ENCODE measurements at regions of chr3 and their contacts with region 1.

Region 1: DNA sequence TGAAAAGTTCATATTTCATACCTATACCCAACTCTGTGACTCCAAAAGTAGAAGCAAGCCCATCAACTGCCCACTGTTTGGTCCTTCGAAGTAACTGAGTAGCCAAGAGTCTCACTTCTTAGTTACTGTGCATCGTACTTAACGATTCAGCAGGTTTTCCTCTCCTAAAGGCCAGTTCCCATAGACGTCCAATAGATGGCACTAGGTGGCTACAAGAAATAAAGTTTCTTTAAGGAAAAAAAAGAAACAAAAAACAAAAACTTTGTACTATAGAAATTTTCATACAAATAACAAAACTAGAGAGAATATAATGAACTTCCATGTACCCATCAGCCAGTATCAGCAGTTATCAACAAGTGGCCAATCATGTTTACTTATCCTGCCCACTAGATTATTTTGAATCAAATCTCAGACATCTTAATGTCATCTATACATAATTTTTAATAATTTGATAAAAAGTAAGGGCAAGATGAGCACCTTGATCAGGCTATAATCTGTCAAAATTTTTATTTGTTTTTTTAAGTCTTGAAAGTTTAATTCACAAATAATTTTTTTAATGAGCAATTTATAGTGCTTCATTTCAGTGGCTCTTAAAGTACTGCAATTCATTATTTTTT is 63.8 kb upstream of the ACP3 start:
- DNase-seq: no peak

Region 2: DNA sequence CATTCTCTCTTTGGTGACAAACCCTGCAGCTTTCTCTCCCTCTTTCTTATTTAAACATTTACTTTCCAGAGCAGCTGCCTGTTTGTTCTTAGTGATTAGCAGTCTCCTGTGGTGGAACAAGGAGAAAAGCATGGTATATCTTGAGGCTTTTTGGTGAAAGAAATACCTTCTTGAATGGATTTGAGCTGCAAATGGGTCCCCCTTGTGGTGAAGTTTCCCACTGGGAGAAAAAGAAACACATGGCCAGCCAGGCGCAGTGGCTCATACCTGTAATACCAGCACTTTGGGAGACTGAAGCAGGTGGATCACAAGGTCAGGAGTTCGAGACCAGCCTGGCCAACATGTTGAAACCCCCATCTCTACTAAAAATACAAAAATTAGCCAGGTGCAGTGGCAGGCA is 15.6 kb after region 1 on chr3:
- intact Hi-C with region 1: no loop called
- DNase-seq: no peak

Region 3: DNA sequence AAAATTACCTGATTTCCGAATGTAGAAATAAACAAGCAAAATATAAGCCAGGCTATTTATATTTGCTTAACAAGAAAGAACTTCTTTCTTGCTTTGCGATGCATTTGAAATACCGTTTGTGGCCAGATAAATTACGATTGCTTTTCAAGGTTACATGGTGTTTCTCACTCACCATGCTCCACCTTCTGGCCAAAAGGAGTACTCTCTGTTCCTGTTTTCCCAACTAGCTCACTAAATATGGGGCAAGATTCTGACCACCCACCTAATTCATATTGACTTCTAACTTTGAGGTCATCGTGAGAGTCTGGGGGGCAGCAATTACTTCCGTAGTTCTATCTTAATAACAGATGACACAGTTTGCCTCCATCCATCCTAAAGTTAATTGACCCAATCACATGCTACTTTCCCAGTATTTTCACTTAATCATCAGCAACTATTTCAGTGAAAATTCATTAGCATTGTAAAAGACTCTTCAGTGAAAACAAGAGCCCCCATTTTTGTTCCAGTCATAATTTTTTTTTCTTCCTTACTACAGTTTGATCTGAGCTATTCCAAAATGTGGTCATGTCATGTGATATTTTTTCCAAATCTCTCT is 89.7 kb after region 1 on chr3:
- intact Hi-C with region 1: loop called in 1 of 2 experiments (anchors 5 kb)
- DNase-seq: no peak

Region 4: GRCh38 chr3:132507657-132508056 is 254.3 kb after region 1 on chr3:
- intact Hi-C with region 1: no loop called
- DNase-seq: no peak

Measured in posterior vena cava (tissue), 2 donors.